H1 (cell line): ENCODE measurements at regions of chr5 and their contacts with region 1.

Region 1: GRCh38 chr5:122192497-122193496 is 63.5 kb downstream of the ZNF474 start:
- DNase-seq: no peak
- H3K4me3 ChIP-seq: no peak overlapping the region
- H3K27ac ChIP-seq: no peak overlapping the region
- H3K4me1 ChIP-seq: peaks cover 0 to 3% (median 0%) of the 10 kb centered on the region in 4 experiments; a peak in 1 of 7 replicates
- H3K27me3 ChIP-seq: no peaks in the 10 kb centered on the region
- CTCF ChIP-seq: peak in 2 of 3 experiments; percentile 61 to 67; a peak in 3 of 4 replicates
- EP300 ChIP-seq: no peak
- POLR2A ChIP-seq: no peak
- RAD21 ChIP-seq: peak; percentile 70 to 81

Region 2: DNA sequence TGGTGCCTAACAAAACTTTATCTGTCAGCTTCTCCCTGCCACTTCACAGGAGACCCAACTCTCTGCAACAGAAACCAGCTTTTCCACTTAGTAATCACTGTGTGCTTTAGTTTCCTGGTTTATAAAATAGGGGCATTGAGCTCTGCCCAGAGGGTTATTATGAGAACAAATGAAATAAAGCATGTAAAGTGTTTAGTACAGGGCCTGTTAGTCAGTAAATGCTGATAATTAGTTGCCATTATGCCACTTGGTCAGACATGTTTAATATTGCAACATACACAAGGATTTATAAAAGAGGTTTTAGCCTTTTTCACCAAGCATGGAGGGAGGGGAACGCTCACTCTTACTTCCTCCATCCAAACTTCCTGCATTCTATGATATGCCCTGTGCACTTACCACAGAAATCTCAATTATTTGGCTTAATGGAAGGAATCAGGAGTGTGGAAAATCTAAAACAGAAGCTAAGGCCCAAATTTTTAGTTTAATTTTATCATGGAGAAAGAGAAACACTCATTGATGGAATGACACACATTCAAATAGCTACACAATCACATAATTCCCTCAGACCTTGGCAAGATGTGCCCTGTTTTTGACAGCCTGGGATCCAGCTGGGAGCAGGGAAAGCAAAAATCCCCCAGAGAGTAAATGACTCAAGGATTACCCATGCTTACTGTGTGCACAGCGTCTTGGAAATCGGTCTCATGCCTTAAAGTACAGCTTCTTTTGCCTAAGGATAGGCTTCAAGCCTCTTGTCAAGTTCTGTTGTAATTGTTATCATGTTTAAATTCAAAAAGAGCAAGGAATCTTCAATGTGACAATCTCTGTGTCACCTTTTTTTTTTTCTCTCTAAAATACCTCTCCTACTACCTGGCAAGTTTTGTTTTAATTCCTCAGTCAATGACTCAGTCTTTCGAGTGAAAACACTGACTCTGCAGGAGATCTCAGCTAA is 29.4 kb before region 1 on chr5:
- CTCF ChIA-PET with region 1: interaction called, 13 read pairs
- POLR2A ChIA-PET with region 1: no interaction called
- DNase-seq: no peak
- H3K4me3 ChIP-seq: no peak overlapping the region
- H3K27ac ChIP-seq: no peak overlapping the region
- H3K4me1 ChIP-seq: peaks cover 0 to 11% (median 6%) of the 10 kb centered on the region in 4 experiments; a peak in 4 of 7 replicates
- H3K27me3 ChIP-seq: no peaks in the 10 kb centered on the region
- CTCF ChIP-seq: no peak
- EP300 ChIP-seq: no peak
- POLR2A ChIP-seq: no peak
- RAD21 ChIP-seq: no peak

Region 3: GRCh38 chr5:122259995-122260394 is 67.2 kb after region 1 on chr5:
- CTCF ChIA-PET with region 1: interaction called, 12 read pairs
- POLR2A ChIA-PET with region 1: no interaction called
- DNase-seq: no peak
- H3K4me3 ChIP-seq: no peak overlapping the region
- H3K27ac ChIP-seq: no peak overlapping the region
- H3K4me1 ChIP-seq: peaks cover 0 to 3% (median 0%) of the 10 kb centered on the region in 4 experiments; a peak in 1 of 7 replicates
- H3K27me3 ChIP-seq: peaks cover 0 to 1% (median 0%) of the 10 kb centered on the region in 4 experiments; a peak in 1 of 7 replicates
- CTCF ChIP-seq: no peak
- EP300 ChIP-seq: no peak
- POLR2A ChIP-seq: no peak
- RAD21 ChIP-seq: no peak

Region 4: GRCh38 chr5:122295138-122295537 is 102.3 kb after region 1 on chr5:
- CTCF ChIA-PET with region 1: interaction called, 19 read pairs
- POLR2A ChIA-PET with region 1: no interaction called
- DNase-seq: no peak
- H3K4me3 ChIP-seq: no peak overlapping the region
- H3K27ac ChIP-seq: no peak overlapping the region
- H3K4me1 ChIP-seq: peaks cover 3 to 11% (median 7%) of the 10 kb centered on the region in 4 experiments; a peak in 5 of 7 replicates
- H3K27me3 ChIP-seq: no peaks in the 10 kb centered on the region
- CTCF ChIP-seq: peak in 2 of 3 experiments; percentile 55 to 74; a peak in 3 of 4 replicates
- EP300 ChIP-seq: no peak
- POLR2A ChIP-seq: no peak
- RAD21 ChIP-seq: peak; percentile 49 to 69

Region 5: DNA sequence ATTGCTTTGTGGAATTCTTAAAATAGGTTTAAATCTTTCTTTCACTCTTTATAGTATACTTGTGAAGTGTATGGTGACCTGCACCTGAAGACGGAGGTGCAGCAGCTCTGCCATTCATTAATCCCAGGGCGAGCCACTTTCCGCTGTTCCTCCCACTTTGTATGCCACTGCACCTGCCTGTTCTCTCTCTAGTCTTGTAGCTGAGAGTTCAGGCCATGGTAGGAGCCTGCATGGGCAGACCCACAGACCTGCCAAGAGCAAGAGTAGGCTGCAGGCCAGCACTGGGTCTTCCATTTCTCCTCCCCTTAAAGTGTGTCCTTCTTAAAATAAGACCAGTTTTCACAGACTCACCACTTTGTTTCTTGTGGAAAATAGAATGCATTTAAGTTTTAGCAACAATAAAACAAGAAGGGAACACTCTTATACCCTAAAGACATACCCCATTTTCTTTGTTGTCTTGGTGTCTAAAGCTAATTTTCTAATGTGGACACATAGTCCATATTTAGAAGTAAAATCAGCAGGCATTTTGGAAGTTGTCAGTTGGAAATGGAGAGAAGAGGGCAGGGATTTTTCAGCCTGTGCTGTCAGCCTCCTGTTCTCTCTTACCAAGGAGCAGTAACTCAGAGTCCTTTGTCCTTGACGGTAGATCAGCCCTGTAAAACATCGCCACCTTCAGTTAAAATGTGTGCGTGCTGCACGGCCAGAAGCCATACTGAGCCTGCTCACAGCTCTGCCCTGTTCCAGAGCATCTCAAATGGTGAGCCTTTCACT is 222.4 kb after region 1 on chr5:
- CTCF ChIA-PET with region 1: interaction called, 56 read pairs
- POLR2A ChIA-PET with region 1: no interaction called
- DNase-seq: peak; percentile 54 to 60
- H3K4me3 ChIP-seq: no peak overlapping the region
- H3K27ac ChIP-seq: no peak overlapping the region
- H3K4me1 ChIP-seq: peaks cover 0 to 2% (median 1%) of the 10 kb centered on the region in 4 experiments; a peak in 2 of 7 replicates
- H3K27me3 ChIP-seq: no peaks in the 10 kb centered on the region
- CTCF ChIP-seq: peak; percentile 82 to 92 (median 88)
- EP300 ChIP-seq: no peak
- POLR2A ChIP-seq: no peak
- RAD21 ChIP-seq: peak; percentile 93 to 94

Region 6: GRCh38 chr5:122471031-122471751 is 278.4 kb after region 1 on chr5:
- CTCF ChIA-PET with region 1: interaction called, 16 read pairs
- POLR2A ChIA-PET with region 1: no interaction called
- DNase-seq: no peak
- H3K4me3 ChIP-seq: no peak overlapping the region
- H3K27ac ChIP-seq: no peak overlapping the region
- H3K4me1 ChIP-seq: peaks cover 4 to 20% (median 14%) of the 10 kb centered on the region in 4 experiments
- H3K27me3 ChIP-seq: no peaks in the 10 kb centered on the region
- CTCF ChIP-seq: peak; percentile 1 to 24 (median 12); a peak in 3 of 4 replicates
- EP300 ChIP-seq: no peak
- POLR2A ChIP-seq: no peak
- RAD21 ChIP-seq: peak; percentile 21 to 44; a peak in 3 of 4 replicates